A549 (cell line): ENCODE measurements at regions of chr1 and their contacts with region 1.

Region 1: DNA sequence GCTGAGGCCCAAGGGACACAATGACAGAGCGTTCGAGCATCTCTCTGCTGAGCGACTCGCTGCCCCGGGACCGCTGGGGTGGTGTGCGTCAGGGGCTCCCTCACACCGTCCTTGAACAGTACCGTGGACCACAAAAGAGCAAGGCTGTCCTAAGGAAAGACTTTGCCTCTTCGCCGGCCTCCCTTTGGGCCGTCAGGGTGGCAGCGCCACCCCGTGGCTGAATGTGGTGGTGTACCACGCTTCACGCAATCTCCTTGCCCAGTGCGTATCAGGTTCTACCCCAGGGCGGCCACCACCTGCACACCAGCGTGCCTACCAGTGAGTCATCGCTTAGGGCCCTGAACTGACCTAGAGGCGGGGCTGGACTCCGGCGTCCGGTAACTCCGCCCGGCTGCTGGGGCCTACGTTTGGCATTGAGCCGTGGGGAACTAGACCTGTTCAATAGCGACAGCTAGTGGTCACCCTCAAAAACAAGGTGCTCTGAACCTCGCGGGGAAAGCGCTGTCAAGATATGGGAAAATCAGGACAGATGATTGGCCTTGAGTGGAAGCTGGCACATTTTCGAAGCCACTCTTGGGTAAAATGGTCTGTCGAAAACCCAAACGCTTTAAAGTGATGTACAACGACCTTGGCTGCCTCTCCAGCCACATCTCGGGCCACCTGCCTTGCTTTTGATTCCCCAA is 8.1 kb upstream of the TRAF3IP3 start:
- DNase-seq: peak; percentile 95 to 97
- ATAC-seq: peak; percentile 99
- H3K4me3 ChIP-seq: peak overlapping the region; percentile 26; the same call in 1 of the 3 replicates
- H3K27ac ChIP-seq: peak overlapping the region; percentile 41 to 74; a peak in 5 of 6 replicates
- H3K4me1 ChIP-seq: peaks cover 7% of the 10 kb centered on the region; the same call in 1 of the 3 replicates
- CTCF ChIP-seq: peak; percentile 96
- EP300 ChIP-seq: no peak
- POLR2A ChIP-seq: no peak
- RAD21 ChIP-seq: peak; percentile 57 to 83

Region 2: GRCh38 chr1:209527993-209528392 is 219.7 kb before region 1 on chr1:
- CTCF ChIA-PET with region 1: no interaction called
- POLR2A ChIA-PET with region 1: no interaction called
- DNase-seq: peak; percentile 12 to 81
- ATAC-seq: peak; percentile 71 to 91
- H3K4me3 ChIP-seq: no peak overlapping the region
- H3K27ac ChIP-seq: peak overlapping the region; percentile 69
- H3K4me1 ChIP-seq: peaks cover 18% of the 10 kb centered on the region
- CTCF ChIP-seq: no peak
- EP300 ChIP-seq: no peak
- POLR2A ChIP-seq: no peak
- RAD21 ChIP-seq: no peak

Region 3: DNA sequence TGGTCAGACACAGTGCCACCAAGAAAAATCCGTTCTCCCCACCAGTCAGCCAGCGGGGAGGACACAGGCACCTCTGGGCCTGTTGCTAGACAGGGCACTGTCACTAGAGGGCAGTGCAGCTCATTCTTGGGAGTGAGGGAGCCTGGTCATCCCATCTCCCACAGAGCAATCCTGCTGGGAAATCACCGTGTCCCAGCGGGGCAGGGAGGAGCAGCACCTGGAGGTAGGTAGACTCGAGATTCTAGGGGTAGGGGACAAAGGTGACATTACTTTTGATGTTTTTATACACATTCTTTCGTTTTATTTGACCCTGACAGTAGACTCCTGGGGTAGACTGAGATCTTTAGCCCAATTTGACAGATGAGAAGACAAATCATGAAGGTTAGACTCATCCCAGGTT is 170.9 kb before region 1 on chr1:
- CTCF ChIA-PET with region 1: interaction called, 15 read pairs
- POLR2A ChIA-PET with region 1: no interaction called
- DNase-seq: peak; percentile 69 to 87
- ATAC-seq: peak; percentile 96 to 100
- H3K4me3 ChIP-seq: no peak overlapping the region
- H3K27ac ChIP-seq: no peak overlapping the region
- H3K4me1 ChIP-seq: no peaks in the 10 kb centered on the region
- CTCF ChIP-seq: peak; percentile 86
- EP300 ChIP-seq: no peak
- POLR2A ChIP-seq: no peak
- RAD21 ChIP-seq: peak; percentile 89 to 92

Region 4: DNA sequence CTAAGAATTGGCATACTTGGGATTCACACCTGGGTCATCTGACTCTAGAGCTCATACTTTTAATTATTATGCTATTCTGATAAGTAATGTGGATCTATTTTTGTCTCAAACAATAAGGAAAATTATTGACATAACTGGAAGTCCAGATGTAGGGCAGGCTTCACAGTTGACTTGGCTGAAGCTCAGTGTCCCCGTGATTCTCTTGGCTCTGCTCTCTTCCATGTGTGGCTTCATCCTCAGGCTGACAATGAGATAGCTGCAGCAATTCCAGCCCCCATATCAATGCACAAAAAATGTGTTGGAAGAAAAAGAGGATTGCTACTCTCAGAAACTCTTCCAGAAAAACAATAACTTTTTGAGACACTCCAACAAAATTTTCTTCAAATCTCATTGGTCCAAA is 19.3 kb before region 1 on chr1:
- CTCF ChIA-PET with region 1: interaction called, 21 read pairs
- POLR2A ChIA-PET with region 1: no interaction called
- DNase-seq: no peak
- ATAC-seq: no peak
- H3K4me3 ChIP-seq: no peak overlapping the region
- H3K27ac ChIP-seq: no peak overlapping the region
- H3K4me1 ChIP-seq: no peaks in the 10 kb centered on the region
- CTCF ChIP-seq: no peak
- EP300 ChIP-seq: no peak
- POLR2A ChIP-seq: no peak
- RAD21 ChIP-seq: no peak

Region 5: DNA sequence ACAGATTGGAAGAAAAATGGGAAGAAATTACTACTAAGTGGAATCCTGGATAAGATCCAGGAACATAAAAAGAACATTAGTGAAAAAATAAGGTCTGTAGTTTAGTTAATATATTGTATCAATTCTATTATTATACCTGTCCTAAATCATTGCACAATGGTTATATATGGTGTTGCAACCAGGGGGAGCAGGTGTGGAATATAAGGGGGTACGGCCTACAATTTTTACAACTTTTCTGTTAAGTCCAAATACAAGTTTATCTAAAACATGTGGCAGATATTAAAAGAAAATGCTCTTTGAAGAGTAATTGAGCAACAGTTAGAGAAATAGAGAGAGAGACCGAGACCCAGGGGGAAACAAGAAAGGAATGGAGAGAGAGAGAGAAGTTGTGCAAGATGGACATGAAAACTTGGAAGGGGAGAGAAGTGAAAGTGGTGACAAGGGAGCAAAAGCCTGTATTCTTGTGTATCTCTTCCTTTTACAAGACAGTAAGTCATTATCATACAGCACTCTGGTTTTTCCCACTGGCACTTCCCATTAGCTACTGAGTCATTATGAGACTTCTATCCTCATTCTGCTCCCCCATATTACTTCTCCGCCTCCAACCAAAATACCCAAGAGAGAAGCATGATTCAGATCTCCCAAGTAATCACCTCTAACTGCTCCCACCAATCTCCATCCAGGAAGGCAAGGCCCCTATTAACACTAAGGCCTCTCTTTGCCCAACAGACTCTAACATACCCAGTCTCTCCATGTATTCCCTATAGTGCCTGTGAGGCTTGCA is 14.1 kb before region 1 on chr1:
- CTCF ChIA-PET with region 1: interaction called, 21 read pairs
- POLR2A ChIA-PET with region 1: no interaction called
- DNase-seq: no peak
- ATAC-seq: no peak
- H3K4me3 ChIP-seq: no peak overlapping the region
- H3K27ac ChIP-seq: no peak overlapping the region
- H3K4me1 ChIP-seq: no peaks in the 10 kb centered on the region
- CTCF ChIP-seq: no peak
- EP300 ChIP-seq: no peak
- POLR2A ChIP-seq: no peak
- RAD21 ChIP-seq: no peak

Region 6: GRCh38 chr1:209761011-209761635 is 13.4 kb after region 1 on chr1:
- CTCF ChIA-PET with region 1: interaction called, 22 read pairs
- POLR2A ChIA-PET with region 1: no interaction called
- DNase-seq: no peak
- ATAC-seq: no peak
- H3K4me3 ChIP-seq: no peak overlapping the region
- H3K27ac ChIP-seq: no peak overlapping the region
- H3K4me1 ChIP-seq: no peaks in the 10 kb centered on the region
- CTCF ChIP-seq: no peak
- EP300 ChIP-seq: no peak
- POLR2A ChIP-seq: no peak
- RAD21 ChIP-seq: no peak